Ascending aorta (tissue), 2 donors: ENCODE measurements at regions of chr1 and their contacts with region 1.

Region 1: GRCh38 chr1:10108134-10108663 is 75.4 kb downstream of the UBE4B start:
- DNase-seq: peak in 1 of 2 donors; percentile 77
- H3K4me3 ChIP-seq: peak overlapping the region in 1 of 2 donors; percentile 40
- H3K27ac ChIP-seq: peak overlapping the region; percentile 83 to 94
- H3K4me1 ChIP-seq: peaks cover 5 to 31% of the 10 kb centered on the region in 2 donors
- H3K27me3 ChIP-seq: no peaks in the 10 kb centered on the region
- CTCF ChIP-seq: no peak

Region 2: DNA sequence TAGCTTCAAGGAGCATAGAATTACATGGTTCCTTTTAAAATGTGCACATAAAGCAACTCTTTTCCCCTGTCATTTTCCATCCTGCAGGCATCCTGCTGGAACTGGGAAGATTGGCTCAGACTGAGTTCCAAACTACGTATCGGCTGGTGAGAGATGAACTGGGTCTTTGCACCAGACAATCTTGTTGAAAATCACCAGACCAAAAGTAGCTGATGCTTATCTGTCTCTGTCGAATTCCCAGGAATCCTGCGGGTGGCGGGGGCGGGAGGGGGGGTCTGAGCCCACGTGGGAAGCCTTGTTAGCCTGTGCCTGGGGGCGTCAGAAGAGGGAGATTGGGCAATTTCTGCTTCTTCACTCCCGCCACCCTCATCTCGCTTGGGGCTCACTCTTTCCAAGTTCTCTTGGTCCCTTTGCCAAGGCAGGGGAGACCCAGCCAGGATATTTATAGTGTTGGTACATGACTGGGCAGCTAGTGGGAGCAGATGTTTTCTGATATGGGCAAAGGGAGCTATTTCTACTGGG is 659.0 kb before region 1 on chr1:
- intact Hi-C with region 1: no loop called
- DNase-seq: peak in 1 of 2 donors; percentile 92
- H3K4me3 ChIP-seq: peak overlapping the region in 1 of 2 donors; percentile 36
- H3K27ac ChIP-seq: peak overlapping the region; percentile 74 to 81
- H3K4me1 ChIP-seq: peaks cover 12 to 25% of the 10 kb centered on the region in 2 donors
- H3K27me3 ChIP-seq: no peaks in the 10 kb centered on the region
- CTCF ChIP-seq: no peak

Region 3: DNA sequence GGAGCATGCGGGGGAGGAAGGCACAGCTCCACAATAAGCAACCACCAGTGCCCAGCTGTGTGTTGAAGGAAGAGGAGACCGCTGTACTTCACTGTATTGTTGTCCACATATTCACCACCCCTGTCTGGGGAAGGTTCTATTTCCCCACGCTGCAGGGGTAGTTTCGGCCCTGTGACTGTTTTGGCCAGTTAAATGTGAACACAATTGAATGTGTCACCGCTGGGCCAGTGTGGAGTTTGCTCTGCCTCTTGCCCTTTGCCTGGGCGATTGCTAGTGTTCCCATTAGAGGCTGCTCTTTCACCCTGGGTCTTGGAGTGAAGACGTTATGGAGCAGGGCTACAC is 42.9 kb before region 1 on chr1:
- intact Hi-C with region 1: loop called (anchors 1 kb)
- DNase-seq: no peak
- H3K4me3 ChIP-seq: no peak overlapping the region
- H3K27ac ChIP-seq: peak overlapping the region; percentile 88 to 91
- H3K4me1 ChIP-seq: peaks cover 3 to 39% of the 10 kb centered on the region in 2 donors
- H3K27me3 ChIP-seq: no peaks in the 10 kb centered on the region
- CTCF ChIP-seq: no peak

Region 4: DNA sequence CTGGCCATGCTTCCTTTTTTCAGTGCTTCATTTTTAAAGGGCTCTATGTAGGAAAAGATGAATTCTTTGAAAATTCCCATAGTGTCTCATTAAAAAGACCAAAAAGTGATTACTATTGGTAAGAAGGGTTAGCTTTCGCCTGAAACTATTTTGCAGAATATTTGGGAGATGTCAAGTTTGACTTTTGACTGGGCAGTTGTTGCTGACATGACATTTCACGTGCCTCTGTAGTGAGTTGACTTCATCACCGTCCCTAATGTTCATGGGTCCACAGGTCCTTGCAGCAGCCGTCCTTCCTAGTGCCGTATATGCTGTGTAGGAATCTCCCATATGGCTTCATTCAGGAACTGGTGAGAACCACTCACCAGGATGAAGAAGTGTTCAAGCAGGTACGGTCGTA is 13.5 kb after region 1 on chr1:
- intact Hi-C with region 1: loop called (anchors 2 kb)
- DNase-seq: no peak
- H3K4me3 ChIP-seq: no peak overlapping the region
- H3K27ac ChIP-seq: peak overlapping the region; percentile 52 to 74
- H3K4me1 ChIP-seq: peaks cover 7 to 27% of the 10 kb centered on the region in 2 donors
- H3K27me3 ChIP-seq: no peaks in the 10 kb centered on the region
- CTCF ChIP-seq: no peak

Region 5: DNA sequence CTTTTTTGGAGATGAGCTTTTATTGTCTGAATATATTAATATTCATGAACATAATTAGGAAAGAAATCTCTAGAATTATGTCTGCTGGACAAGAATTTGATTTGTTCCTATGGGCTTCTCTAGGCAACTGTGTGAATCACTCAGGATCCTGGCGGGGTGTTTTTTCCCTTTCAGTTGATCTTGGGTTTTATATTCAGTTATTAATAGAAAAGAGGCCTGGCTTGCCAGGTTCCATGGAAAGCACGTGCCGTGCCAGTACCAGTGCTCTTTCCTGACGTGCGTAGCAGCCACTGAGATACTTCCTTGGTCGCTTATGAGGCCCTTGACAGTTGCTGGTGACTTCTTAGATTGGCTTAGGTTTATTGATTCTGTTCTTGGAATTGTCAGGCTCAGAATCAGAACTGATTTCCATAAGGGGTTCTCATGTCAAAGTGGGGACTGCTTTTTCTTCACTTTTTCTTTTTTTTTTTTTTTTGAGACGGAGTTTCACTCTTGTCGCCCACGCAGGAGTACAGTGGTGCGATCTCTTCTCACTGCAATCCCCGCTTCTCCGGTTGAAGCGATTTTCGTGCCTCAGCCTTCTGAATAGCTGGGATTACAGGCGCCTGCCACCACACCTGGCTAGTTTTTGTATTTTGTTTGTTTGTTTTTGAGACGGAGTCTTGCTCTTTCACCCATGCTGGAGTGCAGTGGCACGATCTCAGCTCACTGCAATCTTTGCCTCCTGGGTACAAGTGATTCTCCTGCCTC is 53.5 kb after region 1 on chr1:
- intact Hi-C with region 1: loop called (anchors 5 kb)
- DNase-seq: peak; percentile 29 to 90
- H3K4me3 ChIP-seq: no peak overlapping the region
- H3K27ac ChIP-seq: peak overlapping the region; percentile 80 to 84
- H3K4me1 ChIP-seq: peaks cover 0 to 18% of the 10 kb centered on the region in 2 donors
- H3K27me3 ChIP-seq: no peaks in the 10 kb centered on the region
- CTCF ChIP-seq: no peak